ENCODE measurements at regions of chr11 and their contacts with region 1.

Region 1: DNA sequence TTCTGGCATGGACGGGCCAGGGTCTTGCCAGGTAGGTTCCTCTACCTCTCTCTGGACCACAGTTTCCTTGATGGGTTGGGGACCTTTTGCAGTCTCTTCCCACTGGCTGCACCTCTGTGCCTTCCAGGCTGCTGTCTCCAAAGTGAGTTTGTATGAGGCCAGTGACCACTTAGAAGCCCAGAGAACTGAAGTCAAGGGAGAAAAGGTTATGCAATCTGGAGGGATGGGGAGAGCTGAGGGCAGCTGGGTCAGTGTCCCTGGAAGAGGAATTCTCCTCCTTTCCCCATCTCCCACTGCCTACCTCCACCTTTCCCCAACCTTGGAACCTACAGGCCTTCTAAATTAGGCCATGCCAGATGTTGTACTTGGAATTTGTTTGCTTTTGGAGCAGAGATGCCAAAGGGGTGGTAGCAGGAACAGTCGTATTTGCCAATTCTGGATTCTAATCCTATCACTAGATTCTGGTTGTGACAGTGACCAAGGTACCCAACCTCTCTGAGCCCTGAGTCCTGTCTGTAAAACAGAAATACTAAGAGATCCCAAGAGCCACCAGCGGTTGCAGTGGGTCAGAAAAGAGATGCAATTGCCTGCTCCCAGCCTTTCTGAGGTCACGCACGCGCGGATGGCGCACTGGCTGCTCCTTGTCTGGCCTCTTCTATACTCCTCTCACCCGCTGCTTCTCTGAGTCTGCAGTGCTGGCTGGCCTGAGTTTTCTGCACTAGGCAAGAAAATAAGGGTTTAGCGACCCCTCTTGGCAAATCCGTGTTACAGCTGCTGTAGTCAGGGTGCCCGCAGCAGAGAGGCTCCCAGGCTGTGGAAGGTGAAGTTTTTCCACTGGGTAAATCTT is 10.7 kb upstream of the ACCSL start:
- DNase-seq: peak; percentile 67 to 92 (median 85)
- H3K4me3 ChIP-seq: peak overlapping the region in 3 of 59 donors; percentile 1 to 10 (median 9)
- H3K27ac ChIP-seq: peak overlapping the region in 40 of 59 donors; percentile 1 to 77 (median 62)
- H3K27me3 ChIP-seq: no peaks in the 10 kb centered on the region
- CTCF ChIP-seq: peak; percentile 60 to 97 (median 92)

Region 2: GRCh38 chr11:43944761-43945311 is 92.2 kb before region 1 on chr11:
- intact Hi-C with region 1: loop called (anchors 1 to 5 kb)
- DNase-seq: peak in 6 of 10 donors; percentile 63 to 78 (median 66)
- H3K4me3 ChIP-seq: peak overlapping the region in 57 of 59 donors; percentile 52 to 79 (median 67)
- H3K27ac ChIP-seq: peak overlapping the region in 47 of 59 donors; percentile 8 to 95 (median 84)
- H3K27me3 ChIP-seq: peaks cover 0 to 34% (median 4%) of the 10 kb centered on the region in 45 donors
- CTCF ChIP-seq: peak; percentile 53 to 87 (median 74)